ENCODE measurements at regions of chr9 and their contacts with region 1.

Region 1: GRCh38 chr9:16726718-16727451 is 143.6 kb downstream of the BNC2 start:
- DNase-seq: peak; percentile 71
- ATAC-seq: peak; percentile 72
- H3K4me3 ChIP-seq: peak overlapping the region; percentile 76
- H3K27ac ChIP-seq: peak overlapping the region; percentile 86
- H3K4me1 ChIP-seq: peaks cover 37% of the 10 kb centered on the region
- H3K27me3 ChIP-seq: no peaks in the 10 kb centered on the region
- CTCF ChIP-seq: no peak

Region 2: DNA sequence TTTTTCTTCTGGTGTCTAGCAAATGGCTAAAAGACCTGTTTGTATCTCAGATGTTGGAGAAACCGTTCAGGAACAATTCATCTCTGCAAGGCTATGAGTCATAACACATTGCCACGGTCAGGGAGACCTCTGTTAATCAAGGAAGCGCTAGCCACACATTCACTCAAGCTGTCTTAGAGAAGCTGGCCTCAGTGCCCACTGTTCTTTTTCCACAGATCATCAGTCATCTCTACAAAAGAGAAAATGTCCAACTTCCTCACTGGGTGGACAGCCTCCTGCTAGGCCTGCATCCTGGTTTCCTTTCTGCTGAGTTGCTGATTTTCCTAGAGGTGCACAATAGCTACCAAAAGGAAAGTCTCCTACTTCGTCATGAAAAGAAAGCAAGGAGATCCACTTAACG is 216.9 kb before region 1 on chr9:
- CTCF ChIA-PET with region 1: no interaction called
- POLR2A ChIA-PET with region 1: no interaction called
- intact Hi-C with region 1: loop called (anchors 5 kb)
- DNase-seq: peak; percentile 10
- ATAC-seq: no peak
- H3K4me3 ChIP-seq: no peak overlapping the region
- H3K27ac ChIP-seq: no peak overlapping the region
- H3K4me1 ChIP-seq: peaks cover 18% of the 10 kb centered on the region
- H3K27me3 ChIP-seq: no peaks in the 10 kb centered on the region
- CTCF ChIP-seq: no peak

Region 3: GRCh38 chr9:16575142-16575985 is 151.5 kb before region 1 on chr9:
- CTCF ChIA-PET with region 1: no interaction called
- POLR2A ChIA-PET with region 1: no interaction called
- intact Hi-C with region 1: loop called (anchors 5 kb)
- DNase-seq: peak; percentile 33
- ATAC-seq: no peak
- H3K4me3 ChIP-seq: no peak overlapping the region
- H3K27ac ChIP-seq: no peak overlapping the region
- H3K4me1 ChIP-seq: peaks cover 25% of the 10 kb centered on the region
- H3K27me3 ChIP-seq: no peaks in the 10 kb centered on the region
- CTCF ChIP-seq: peak; percentile 47; the same call in 1 of the 2 replicates

Region 4: GRCh38 chr9:16601991-16602390 is 124.9 kb before region 1 on chr9:
- CTCF ChIA-PET with region 1: no interaction called
- POLR2A ChIA-PET with region 1: no interaction called
- intact Hi-C with region 1: loop called (anchors 10 kb)
- DNase-seq: peak; percentile 7
- ATAC-seq: no peak
- H3K4me3 ChIP-seq: no peak overlapping the region
- H3K27ac ChIP-seq: no peak overlapping the region
- H3K4me1 ChIP-seq: no peaks in the 10 kb centered on the region
- H3K27me3 ChIP-seq: no peaks in the 10 kb centered on the region
- CTCF ChIP-seq: peak; percentile 29; the same call in 1 of the 2 replicates

Region 5: DNA sequence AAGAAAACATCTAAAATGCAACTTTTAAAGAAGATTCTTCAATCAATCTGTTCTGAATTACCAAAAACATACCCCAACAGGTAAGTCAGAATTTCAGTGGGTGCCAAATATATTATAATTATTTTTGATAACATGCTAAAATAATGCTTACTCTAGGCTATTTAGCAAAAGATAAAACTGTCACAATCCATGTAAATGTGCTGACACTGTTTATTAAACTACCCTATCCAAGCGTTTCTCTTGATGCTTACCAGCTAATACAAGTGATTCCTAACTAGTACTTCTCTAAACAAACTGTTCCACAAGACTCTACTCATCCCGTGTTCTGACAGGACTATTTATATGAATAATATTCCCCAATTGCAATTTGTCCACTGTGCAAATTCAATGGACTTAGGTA is 93.1 kb before region 1 on chr9:
- CTCF ChIA-PET with region 1: no interaction called
- POLR2A ChIA-PET with region 1: no interaction called
- intact Hi-C with region 1: no loop called
- DNase-seq: no peak
- ATAC-seq: no peak
- H3K4me3 ChIP-seq: no peak overlapping the region
- H3K27ac ChIP-seq: no peak overlapping the region
- H3K4me1 ChIP-seq: no peaks in the 10 kb centered on the region
- H3K27me3 ChIP-seq: no peaks in the 10 kb centered on the region
- CTCF ChIP-seq: no peak

Region 6: DNA sequence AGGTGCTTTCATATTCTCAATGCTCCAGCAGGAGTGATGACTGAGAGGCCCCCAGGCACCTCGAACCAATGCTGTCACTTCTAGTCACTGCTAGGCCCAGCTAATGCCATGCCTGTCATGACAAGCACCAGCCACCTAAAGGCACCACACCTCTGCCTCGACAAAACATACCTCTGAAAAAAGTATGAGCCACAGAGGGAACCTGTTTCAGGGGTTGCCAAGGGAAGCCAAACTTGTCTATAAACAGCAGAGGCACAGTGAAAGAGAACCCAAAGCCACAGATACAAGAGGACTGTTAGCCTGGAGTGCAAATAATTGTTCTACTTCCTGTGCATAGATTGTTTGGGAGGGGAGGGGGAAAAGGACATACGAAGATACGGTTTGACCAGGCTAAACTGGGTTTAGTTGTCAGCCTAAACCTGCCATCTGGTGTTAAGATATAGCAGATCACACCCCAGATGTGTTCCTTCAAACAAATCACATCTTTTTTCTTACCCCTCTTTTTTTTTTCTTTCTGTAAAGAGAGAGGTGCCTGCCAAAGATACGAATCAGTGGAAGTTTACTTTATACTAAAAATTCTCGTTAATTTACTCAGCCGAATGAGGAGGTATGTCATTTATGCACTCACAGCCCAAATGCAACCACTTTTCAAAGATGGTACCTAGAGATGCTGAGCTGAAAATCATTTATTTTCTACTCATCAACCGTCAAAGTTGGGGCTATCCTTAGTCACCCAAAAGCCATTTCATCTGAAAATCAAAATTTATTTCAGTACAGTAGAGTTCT is 97.9 kb after region 1 on chr9:
- CTCF ChIA-PET with region 1: no interaction called
- POLR2A ChIA-PET with region 1: no interaction called
- intact Hi-C with region 1: loop called (anchors 2 kb)
- DNase-seq: peak; percentile 54
- ATAC-seq: peak; percentile 53
- H3K4me3 ChIP-seq: no peak overlapping the region
- H3K27ac ChIP-seq: 0 out of 2 replicates have a peak overlapping the region, but pooled peaks have one; percentile 9
- H3K4me1 ChIP-seq: peaks cover 33% of the 10 kb centered on the region
- H3K27me3 ChIP-seq: no peaks in the 10 kb centered on the region
- CTCF ChIP-seq: peak; percentile 36; the same call in 1 of the 2 replicates

Region 7: GRCh38 chr9:16871356-16872151 is 144.7 kb after region 1 on chr9:
- CTCF ChIA-PET with region 1: no interaction called
- POLR2A ChIA-PET with region 1: no interaction called
- intact Hi-C with region 1: loop called (anchors 2 kb)
- DNase-seq: peak; percentile 71
- ATAC-seq: peak; percentile 41
- H3K4me3 ChIP-seq: peak overlapping the region; percentile 89
- H3K27ac ChIP-seq: peak overlapping the region; percentile 64
- H3K4me1 ChIP-seq: peaks cover 33% of the 10 kb centered on the region
- H3K27me3 ChIP-seq: no peaks in the 10 kb centered on the region
- CTCF ChIP-seq: no peak

Region 8: DNA sequence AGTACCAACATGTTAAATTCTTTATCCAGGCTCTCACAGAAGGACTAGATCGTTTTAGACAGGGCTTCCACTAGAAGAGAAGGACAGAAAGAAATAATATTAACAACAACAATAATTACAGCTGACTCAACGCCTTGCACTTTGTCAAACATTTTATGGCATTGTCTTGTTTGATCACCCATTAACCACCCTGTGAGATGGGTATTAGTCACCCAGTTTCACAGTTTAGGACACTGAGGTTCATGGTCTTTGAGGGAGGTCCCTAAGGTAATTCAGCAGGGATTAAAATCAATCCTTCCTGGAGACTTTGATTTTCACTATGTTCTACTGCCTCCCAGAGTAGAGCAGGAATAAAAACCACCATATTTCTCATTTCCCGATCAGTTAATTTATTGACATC is 195.0 kb after region 1 on chr9:
- CTCF ChIA-PET with region 1: no interaction called
- POLR2A ChIA-PET with region 1: no interaction called
- intact Hi-C with region 1: loop called (anchors 1 kb)
- DNase-seq: peak; percentile 77
- ATAC-seq: peak; percentile 95
- H3K4me3 ChIP-seq: no peak overlapping the region
- H3K27ac ChIP-seq: peak overlapping the region; percentile 52
- H3K4me1 ChIP-seq: peaks cover 21% of the 10 kb centered on the region
- H3K27me3 ChIP-seq: no peaks in the 10 kb centered on the region
- CTCF ChIP-seq: peak; percentile 59